Transverse colon (tissue), 4 donors: ENCODE measurements at regions of chr12 and their contacts with region 1.

Region 1: DNA sequence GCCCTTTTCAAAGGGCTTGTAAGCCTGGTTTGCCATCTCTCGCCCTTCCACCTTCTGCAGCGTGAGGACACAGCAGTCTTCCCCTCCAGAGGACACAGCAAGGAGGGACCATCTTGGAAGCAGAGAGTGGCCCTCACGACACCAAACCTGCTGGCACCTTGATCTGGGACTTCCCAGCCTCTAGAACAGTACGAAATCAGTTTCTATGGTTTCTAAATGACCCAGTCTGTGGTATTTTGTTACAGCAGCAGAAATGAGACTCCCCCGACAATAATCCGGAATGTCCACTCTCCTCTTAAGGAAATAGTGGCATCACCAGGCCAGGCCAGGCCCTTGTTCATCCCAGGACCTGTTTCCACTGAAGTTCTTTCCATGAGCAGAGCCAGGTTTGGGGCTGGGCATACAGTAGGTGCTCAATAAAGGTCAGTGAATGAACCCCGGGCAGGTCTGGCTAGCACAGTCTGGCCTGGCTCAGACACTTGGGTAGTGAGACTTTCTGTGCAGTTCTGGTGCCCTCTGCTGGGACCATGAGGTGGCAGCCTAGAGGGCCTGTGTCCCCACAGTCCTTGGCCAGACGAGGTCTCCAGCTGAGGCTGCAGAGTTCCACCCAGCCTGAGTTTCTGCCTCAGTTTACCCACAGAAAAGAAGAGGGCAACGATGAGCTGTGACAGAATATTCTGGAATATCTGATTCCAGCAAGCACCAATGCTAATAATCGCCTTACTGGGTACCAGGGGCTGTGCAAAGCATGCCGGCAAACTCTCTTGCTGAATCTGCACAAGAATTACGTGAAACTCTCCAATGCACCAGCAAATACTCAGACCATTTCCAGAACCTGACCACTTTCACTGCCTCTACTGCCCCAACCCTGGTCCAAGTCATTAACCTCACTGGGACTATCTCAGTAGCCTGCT is 14.0 kb downstream of the ABCB9 start:
- DNase-seq: peak; percentile 85
- H3K4me3 ChIP-seq: no peak overlapping the region
- H3K27ac ChIP-seq: peak overlapping the region; percentile 34 to 71 (median 60)
- H3K4me1 ChIP-seq: peaks cover 13 to 33% (median 15%) of the 10 kb centered on the region in 4 donors
- H3K27me3 ChIP-seq: no peaks in the 10 kb centered on the region
- CTCF ChIP-seq: peak; percentile 78 to 90 (median 84)
- EP300 ChIP-seq: no peak
- POLR2A ChIP-seq: no peak

Region 2: DNA sequence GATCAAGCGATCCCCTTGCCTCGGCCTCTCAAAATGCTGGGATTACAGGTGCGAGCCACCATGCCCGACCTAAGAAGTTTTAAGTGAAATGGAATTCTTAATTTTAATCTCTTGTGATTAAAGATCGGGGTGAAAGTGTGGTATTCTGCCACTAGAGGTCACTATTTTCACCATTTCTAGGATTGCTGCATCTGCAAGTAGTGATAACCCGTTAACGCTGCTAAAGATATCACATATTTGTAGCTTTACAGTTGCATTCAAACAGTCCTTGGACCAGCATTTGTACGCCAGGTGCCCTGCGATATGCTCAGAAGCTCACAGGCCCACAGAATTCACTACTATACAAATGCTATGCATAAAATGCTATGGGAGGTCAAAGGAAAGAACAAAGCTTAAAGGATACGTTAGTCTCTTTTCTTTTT is 158.5 kb before region 1 on chr12:
- in situ Hi-C with region 1: loop called in 2 of 4 experiments (anchors 5 to 10 kb)
- intact Hi-C with region 1: no loop called
- DNase-seq: no peak
- H3K4me3 ChIP-seq: no peak overlapping the region
- H3K27ac ChIP-seq: no peak overlapping the region
- H3K4me1 ChIP-seq: no peaks in the 10 kb centered on the region
- H3K27me3 ChIP-seq: no peaks in the 10 kb centered on the region
- CTCF ChIP-seq: peak; percentile 67 to 80 (median 76)
- EP300 ChIP-seq: no peak
- POLR2A ChIP-seq: no peak

Region 3: GRCh38 chr12:122799641-122800243 is 152.5 kb before region 1 on chr12:
- in situ Hi-C with region 1: loop called in 2 of 4 experiments (anchors 5 to 10 kb)
- intact Hi-C with region 1: loop called (anchors 10 kb)
- DNase-seq: no peak
- H3K4me3 ChIP-seq: no peak overlapping the region
- H3K27ac ChIP-seq: no peak overlapping the region
- H3K4me1 ChIP-seq: no peaks in the 10 kb centered on the region
- H3K27me3 ChIP-seq: no peaks in the 10 kb centered on the region
- CTCF ChIP-seq: no peak
- EP300 ChIP-seq: no peak
- POLR2A ChIP-seq: no peak

Region 4: DNA sequence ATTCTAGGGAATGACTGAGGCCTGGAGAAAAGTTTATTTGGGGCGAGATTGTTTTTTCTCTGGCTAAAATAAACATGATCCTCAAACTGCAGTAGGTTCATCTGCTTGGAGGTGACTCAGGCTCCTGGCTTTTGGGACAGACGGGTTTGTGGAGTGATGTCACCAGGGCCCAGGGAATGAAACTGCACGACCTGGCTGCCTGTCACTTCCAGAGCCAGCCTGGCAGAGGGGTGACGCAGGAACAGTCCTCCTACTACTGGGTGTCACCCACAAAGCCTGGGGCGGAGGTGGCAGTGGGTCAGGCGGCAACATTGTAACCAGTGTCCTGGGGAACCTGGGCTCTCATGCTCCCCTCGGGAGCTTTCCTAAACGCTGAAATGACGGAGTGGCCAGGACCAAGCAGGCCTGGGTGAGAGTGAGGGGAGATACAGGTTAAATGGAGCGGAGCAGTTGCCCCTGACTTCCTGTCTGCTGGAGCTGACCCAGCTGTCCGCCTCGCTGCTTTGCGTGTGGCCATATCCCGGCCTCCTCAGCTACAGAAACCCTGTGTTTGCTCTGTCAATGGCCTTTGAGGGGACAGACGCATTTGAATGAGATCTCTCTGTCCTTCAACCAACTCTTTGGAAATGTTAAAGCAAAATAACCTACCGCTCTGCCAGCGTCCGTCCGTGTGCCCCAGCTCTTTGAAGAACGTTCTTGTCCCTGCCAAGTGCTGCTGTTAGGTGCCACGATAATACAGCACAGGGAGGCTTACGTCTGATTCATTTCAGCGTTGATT is 110.5 kb before region 1 on chr12:
- in situ Hi-C with region 1: loop called in 1 of 4 experiments (anchors 5 kb)
- intact Hi-C with region 1: no loop called
- DNase-seq: no peak
- H3K4me3 ChIP-seq: no peak overlapping the region
- H3K27ac ChIP-seq: peak overlapping the region in 1 of 4 donors; percentile 5
- H3K4me1 ChIP-seq: peaks cover 0 to 33% (median 28%) of the 10 kb centered on the region in 4 donors
- H3K27me3 ChIP-seq: no peaks in the 10 kb centered on the region
- CTCF ChIP-seq: no peak
- EP300 ChIP-seq: no peak
- POLR2A ChIP-seq: no peak

Region 5: DNA sequence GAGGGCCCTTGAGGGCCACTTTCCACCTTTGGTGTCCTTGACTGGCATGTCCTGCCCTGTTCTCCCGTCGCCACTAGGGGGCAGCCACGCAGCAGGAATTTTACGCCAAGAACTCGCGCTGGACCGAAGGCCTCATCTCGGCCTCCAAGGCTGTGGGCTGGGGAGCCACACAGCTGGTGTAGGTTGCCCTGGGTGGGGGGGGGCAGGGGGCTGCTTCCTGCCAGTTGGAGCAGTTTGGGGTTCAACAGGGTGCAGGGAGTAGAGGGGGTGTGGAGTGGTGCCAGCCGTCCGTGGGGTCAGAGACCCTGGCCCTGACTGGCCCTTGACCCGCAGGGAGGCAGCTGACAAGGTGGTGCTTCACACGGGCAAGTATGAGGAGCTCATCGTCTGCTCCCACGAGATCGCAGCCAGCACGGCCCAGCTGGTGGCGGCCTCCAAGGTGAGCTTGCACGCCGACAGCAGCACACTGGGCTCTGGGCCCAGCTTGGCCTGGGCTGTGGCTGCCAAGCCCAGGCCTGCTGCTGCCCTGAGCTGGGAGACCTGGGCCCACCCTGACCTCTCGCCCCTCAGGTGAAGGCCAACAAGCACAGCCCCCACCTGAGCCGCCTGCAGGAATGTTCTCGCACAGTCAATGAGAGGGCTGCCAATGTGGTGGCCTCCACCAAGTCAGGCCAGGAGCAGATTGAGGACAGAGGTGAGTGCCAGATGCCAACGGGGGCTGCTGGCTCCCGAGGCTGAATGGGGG is 91.7 kb before region 1 on chr12:
- in situ Hi-C with region 1: loop called in 2 of 4 experiments (anchors 5 kb)
- intact Hi-C with region 1: loop called (anchors 5 kb)
- DNase-seq: peak; percentile 91
- H3K4me3 ChIP-seq: no peak overlapping the region
- H3K27ac ChIP-seq: peak overlapping the region; percentile 11 to 47 (median 30)
- H3K4me1 ChIP-seq: peaks cover 12 to 34% (median 22%) of the 10 kb centered on the region in 4 donors
- H3K27me3 ChIP-seq: no peaks in the 10 kb centered on the region
- CTCF ChIP-seq: peak; percentile 94 to 96 (median 96)
- EP300 ChIP-seq: no peak
- POLR2A ChIP-seq: no peak

Region 6: GRCh38 chr12:122871851-122872780 is 80.1 kb before region 1 on chr12:
- in situ Hi-C with region 1: loop called in 1 of 4 experiments (anchors 10 kb)
- intact Hi-C with region 1: no loop called
- DNase-seq: peak; percentile 82
- H3K4me3 ChIP-seq: peak overlapping the region in 3 of 4 donors; percentile 2 to 33 (median 2)
- H3K27ac ChIP-seq: peak overlapping the region; percentile 81 to 89 (median 87)
- H3K4me1 ChIP-seq: peaks cover 52 to 99% (median 80%) of the 10 kb centered on the region in 4 donors
- H3K27me3 ChIP-seq: no peaks in the 10 kb centered on the region
- CTCF ChIP-seq: no peak
- EP300 ChIP-seq: no peak
- POLR2A ChIP-seq: peak; percentile 33

Region 7: DNA sequence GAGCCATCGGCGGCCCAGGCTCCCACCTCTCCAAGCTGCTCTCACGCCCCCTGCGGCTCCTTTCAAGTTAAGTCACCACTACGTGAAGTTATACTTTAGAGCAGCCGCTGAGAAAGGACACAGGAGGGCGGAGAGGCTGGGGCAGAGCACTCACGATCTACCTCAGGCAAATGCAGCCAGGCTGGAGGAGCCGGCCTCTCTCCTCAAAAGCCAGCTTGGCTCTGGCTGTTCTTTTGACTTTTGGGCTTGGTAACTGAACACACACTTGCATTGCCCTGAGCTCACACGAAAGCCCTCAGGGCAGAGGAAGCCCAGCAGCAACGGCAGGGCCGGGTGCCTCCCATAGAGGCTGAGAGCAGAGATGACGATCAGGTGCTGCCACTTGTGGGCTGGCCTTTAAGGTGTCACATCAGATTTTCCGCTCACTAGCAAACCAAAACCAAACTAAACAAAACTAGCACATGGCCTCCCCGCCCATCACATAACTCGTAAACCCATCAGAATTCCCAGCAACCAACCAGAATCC is 123.5 kb after region 1 on chr12:
- in situ Hi-C with region 1: no loop called
- intact Hi-C with region 1: no loop called
- DNase-seq: peak; percentile 33
- H3K4me3 ChIP-seq: peak overlapping the region in 1 of 4 donors; percentile 2
- H3K27ac ChIP-seq: peak overlapping the region; percentile 71 to 76 (median 72)
- H3K4me1 ChIP-seq: peaks cover 28 to 37% (median 32%) of the 10 kb centered on the region in 4 donors
- H3K27me3 ChIP-seq: no peaks in the 10 kb centered on the region
- CTCF ChIP-seq: peak in 3 of 5 experiments; percentile 6 to 26 (median 23)
- EP300 ChIP-seq: no peak
- POLR2A ChIP-seq: peak; percentile 31